A549 (cell line): ENCODE measurements at regions of chr2 and their contacts with region 1.

Region 1: DNA sequence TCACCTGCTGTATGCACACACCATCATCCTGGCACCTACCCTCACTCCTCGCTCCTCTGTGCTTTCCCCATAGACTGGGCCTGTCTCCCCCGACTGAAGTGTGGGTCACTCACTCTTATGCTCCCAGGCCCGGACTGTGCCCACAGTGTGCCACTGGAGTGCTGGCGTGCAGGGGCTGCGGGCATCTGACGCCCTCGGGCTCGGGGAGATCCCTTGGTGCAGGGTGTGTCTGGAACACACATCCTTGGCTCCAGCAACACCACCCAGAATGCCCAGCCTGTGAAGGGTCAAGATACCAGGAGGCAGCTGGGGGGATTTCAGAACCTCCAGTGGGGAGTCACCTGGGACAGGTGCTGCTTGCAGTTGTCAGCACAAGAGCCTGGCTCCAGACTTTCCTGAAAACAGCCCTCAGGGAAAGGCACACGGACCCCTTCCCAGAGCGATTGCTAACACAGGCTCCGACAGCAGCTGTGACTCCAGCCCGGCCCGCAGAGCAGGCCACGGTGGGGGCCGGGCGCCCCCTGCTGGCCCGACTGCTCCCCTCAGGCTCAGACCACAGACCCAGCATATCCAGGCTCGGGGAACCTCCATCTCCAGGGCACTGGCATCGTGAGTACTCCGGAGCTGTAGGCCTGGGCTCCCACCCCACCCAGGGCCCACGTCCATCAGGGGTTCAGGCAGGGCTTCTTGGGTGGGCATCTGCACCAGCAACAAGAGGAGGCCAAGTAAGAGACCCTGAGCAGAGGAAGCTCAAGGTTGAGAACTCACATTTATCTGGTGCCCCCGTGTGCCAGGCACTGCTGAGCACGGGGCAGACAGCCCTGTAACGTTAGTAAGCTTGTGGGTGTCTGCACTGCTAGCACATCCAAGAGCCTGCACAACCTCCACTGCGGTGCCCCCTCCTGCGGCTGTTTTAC is 8.6 kb downstream of the HS1BP3 start:
- DNase-seq: peak; percentile 69 to 95
- ATAC-seq: peak; percentile 89 to 99
- H3K4me3 ChIP-seq: no peak overlapping the region
- H3K27ac ChIP-seq: peak overlapping the region in 1 of 2 experiments; percentile 49; a peak in 4 of 6 replicates
- H3K4me1 ChIP-seq: peaks cover 11% of the 10 kb centered on the region; the same call in 2 of the 3 replicates
- CTCF ChIP-seq: peak; percentile 96
- EP300 ChIP-seq: no peak
- POLR2A ChIP-seq: no peak
- RAD21 ChIP-seq: peak; percentile 96

Region 2: GRCh38 chr2:20378792-20379519 is 263.4 kb before region 1 on chr2:
- CTCF ChIA-PET with region 1: interaction called, 105 read pairs
- POLR2A ChIA-PET with region 1: no interaction called
- DNase-seq: peak; percentile 77 to 78
- ATAC-seq: peak; percentile 98 to 99
- H3K4me3 ChIP-seq: no peak overlapping the region
- H3K27ac ChIP-seq: peak overlapping the region; percentile 23 to 58; a peak in 4 of 6 replicates
- H3K4me1 ChIP-seq: peaks cover 10% of the 10 kb centered on the region; the same call in 1 of the 3 replicates
- CTCF ChIP-seq: peak; percentile 80
- EP300 ChIP-seq: no peak
- POLR2A ChIP-seq: no peak
- RAD21 ChIP-seq: peak; percentile 80 to 85

Region 3: GRCh38 chr2:20411361-20411894 is 230.9 kb before region 1 on chr2:
- CTCF ChIA-PET with region 1: interaction called, 355 read pairs
- POLR2A ChIA-PET with region 1: no interaction called
- DNase-seq: peak; percentile 79 to 86
- ATAC-seq: peak; percentile 100
- H3K4me3 ChIP-seq: no peak overlapping the region
- H3K27ac ChIP-seq: no peak overlapping the region
- H3K4me1 ChIP-seq: peaks cover 4% of the 10 kb centered on the region; the same call in 1 of the 3 replicates
- CTCF ChIP-seq: peak; percentile 81
- EP300 ChIP-seq: no peak
- POLR2A ChIP-seq: no peak
- RAD21 ChIP-seq: peak; percentile 79 to 86

Region 4: DNA sequence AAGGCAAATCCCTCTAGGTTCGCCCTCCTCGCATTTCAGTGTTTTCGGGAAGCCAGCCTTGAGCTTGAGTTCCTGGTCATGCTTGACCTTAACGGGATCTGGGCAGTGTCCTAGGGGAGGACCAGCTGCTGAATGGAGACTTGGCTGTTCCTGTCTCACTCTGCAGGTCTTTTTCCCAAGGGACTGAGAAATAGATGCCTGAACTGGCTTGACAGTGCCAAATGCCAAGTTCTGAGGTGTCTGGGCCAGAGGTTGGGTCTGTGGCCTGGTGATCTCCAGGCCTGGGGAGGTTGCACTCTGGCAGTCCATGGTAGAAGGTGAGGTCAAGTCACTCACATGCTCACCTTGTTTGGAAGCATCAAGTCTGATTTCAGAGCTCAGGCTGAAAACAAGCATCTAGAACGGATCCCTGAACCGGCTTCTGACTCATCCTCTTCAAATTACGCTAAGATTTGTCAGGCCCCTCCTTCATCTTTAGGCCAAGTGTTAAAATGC is 175.8 kb before region 1 on chr2:
- CTCF ChIA-PET with region 1: interaction called, 13 read pairs
- POLR2A ChIA-PET with region 1: no interaction called
- DNase-seq: no peak
- ATAC-seq: peak in 1 of 2 experiments; percentile 30; a peak in 2 of 6 replicates
- H3K4me3 ChIP-seq: no peak overlapping the region
- H3K27ac ChIP-seq: no peak overlapping the region
- H3K4me1 ChIP-seq: no peaks in the 10 kb centered on the region
- CTCF ChIP-seq: no peak
- EP300 ChIP-seq: no peak
- POLR2A ChIP-seq: no peak
- RAD21 ChIP-seq: no peak

Region 5: DNA sequence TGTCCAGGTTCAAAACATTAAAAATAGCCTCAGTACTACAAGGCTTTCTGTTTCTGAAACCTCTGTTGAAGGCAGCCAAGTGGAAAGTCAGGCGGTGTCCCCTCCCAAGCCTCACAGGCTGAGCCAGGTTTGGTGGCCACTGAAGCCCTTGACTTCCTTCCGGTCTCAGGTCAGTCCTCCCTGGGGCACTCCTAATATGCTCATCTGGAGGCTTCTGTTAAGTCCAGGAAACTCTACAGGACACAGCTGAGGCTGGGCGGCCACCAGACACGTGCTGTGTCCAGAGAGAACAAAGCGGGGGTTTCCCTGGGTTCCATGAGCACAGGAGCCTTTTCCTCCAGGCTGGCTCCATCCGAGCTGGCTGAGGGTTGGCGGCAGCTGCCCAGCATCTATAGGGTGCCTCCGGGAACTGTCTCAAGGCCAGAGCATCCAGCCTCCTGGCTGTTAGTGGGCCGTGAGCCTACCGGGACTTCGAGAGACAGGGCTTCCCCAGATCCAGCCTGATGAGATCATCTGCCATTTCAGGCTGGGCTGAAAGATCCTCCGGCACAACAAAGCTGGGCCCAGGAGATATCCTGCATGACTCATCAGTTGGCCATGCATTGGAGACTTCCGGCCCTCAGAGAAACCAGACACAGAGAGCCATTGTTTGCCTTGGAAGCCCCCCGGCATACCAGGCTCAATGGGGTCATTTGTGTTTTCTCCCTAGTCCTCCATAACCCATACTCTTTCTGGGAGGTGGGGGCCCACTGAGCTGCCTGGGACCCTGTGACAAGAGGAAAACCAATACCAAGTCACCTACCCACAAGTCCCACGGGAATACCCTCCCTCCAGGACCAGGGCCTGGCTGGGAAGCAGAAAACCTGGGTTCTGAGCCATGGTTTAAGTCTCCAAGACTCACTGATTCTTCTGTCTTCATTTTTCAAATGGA is 63.2 kb before region 1 on chr2:
- CTCF ChIA-PET with region 1: interaction called, 10 read pairs
- POLR2A ChIA-PET with region 1: no interaction called
- DNase-seq: peak; percentile 89 to 93
- ATAC-seq: peak; percentile 83 to 88
- H3K4me3 ChIP-seq: no peak overlapping the region
- H3K27ac ChIP-seq: peak overlapping the region; percentile 81 to 92
- H3K4me1 ChIP-seq: peaks cover 53% of the 10 kb centered on the region
- CTCF ChIP-seq: no peak
- EP300 ChIP-seq: 0 out of 5 replicates have a peak, but pooled peaks of 1 of the 2 experiments have one; percentile 16
- POLR2A ChIP-seq: no peak
- RAD21 ChIP-seq: peak in 1 of 2 experiments; percentile 26; a peak in 1 of 5 replicates

Region 6: GRCh38 chr2:20625491-20626391 is 16.6 kb before region 1 on chr2:
- CTCF ChIA-PET with region 1: interaction called, 195 read pairs
- POLR2A ChIA-PET with region 1: no interaction called
- DNase-seq: no peak
- ATAC-seq: no peak
- H3K4me3 ChIP-seq: no peak overlapping the region
- H3K27ac ChIP-seq: no peak overlapping the region
- H3K4me1 ChIP-seq: no peaks in the 10 kb centered on the region
- CTCF ChIP-seq: no peak
- EP300 ChIP-seq: no peak
- POLR2A ChIP-seq: no peak
- RAD21 ChIP-seq: no peak